Activated T-helper 1 cell treated with anti-CD3 and anti-CD28 coated beads, Interleukin-12 subunit alpha, Interleukin-12 subunit beta, Interleukin-2, Interleukin-4 antibody, amounts not matched to agents 30 ng/mL and 10 ng/mL and 1 ng/mL, durations not matched to agents 14 hours and 24 hours and 36 hours (primary cell): ENCODE measurements at regions of chr9 and their contacts with region 1.

Region 1: GRCh38 chr9:93807166-93808074 is 147.7 kb downstream of the BARX1 start:
- DNase-seq: no peak
- H3K4me3 Mint-ChIP-seq: no peak overlapping the region
- H3K27ac Mint-ChIP-seq: no peak overlapping the region
- H3K4me1 Mint-ChIP-seq: no peaks in the 10 kb centered on the region
- H3K27me3 Mint-ChIP-seq: no peaks in the 10 kb centered on the region

Region 2: DNA sequence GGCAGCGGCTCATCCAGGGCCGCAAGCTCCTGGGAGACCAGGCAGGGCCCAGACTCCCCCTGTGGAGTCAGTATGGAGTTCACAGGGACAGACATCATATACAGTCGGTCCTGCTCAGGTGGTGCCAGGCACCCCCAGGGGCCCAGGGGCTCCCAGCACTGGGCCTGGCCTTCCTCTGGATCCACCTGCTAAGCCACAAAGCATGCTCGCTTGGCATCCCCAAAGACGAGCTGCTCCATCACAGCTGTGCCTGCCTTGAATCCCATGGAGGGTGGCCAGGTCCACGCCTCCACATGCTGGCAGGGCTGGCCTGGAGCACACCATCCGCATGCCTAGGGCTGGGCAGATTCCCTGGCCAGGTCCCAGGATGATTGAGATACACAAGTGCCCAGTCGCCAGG is 1047.3 kb before region 1 on chr9:
- intact Hi-C with region 1: no loop called
- DNase-seq: no peak
- H3K4me3 Mint-ChIP-seq: no peak overlapping the region
- H3K27ac Mint-ChIP-seq: no peak overlapping the region
- H3K4me1 Mint-ChIP-seq: peaks cover 29% of the 10 kb centered on the region
- H3K27me3 Mint-ChIP-seq: no peaks in the 10 kb centered on the region

Region 3: GRCh38 chr9:93774331-93775102 is 32.9 kb before region 1 on chr9:
- intact Hi-C with region 1: loop called (anchors 2 kb)
- DNase-seq: no peak
- H3K4me3 Mint-ChIP-seq: no peak overlapping the region
- H3K27ac Mint-ChIP-seq: no peak overlapping the region
- H3K4me1 Mint-ChIP-seq: no peaks in the 10 kb centered on the region
- H3K27me3 Mint-ChIP-seq: peaks cover 6% of the 10 kb centered on the region